ENCODE measurements at regions of chr2 and their contacts with region 1.

Region 1: DNA sequence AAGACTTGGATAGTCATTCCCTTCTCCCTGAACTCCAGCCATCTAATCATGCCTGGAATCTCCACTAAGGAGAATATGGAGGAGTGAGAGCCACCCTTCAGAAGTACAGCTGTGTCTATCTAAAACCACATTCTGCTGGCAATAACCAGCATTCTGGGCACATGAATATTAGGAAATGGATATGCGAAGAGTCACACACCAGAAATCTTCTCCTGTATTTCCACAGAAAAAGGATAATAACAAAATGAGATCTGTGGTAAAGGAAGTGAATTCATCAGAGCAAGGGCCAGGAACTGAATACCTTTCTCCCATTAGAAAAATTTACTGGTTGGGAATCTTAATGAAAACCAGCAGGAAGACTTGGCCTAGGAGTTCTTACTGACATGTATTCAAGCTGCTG is 218.8 kb downstream of the SCG2 start:
- DNase-seq: no peak

Region 2: DNA sequence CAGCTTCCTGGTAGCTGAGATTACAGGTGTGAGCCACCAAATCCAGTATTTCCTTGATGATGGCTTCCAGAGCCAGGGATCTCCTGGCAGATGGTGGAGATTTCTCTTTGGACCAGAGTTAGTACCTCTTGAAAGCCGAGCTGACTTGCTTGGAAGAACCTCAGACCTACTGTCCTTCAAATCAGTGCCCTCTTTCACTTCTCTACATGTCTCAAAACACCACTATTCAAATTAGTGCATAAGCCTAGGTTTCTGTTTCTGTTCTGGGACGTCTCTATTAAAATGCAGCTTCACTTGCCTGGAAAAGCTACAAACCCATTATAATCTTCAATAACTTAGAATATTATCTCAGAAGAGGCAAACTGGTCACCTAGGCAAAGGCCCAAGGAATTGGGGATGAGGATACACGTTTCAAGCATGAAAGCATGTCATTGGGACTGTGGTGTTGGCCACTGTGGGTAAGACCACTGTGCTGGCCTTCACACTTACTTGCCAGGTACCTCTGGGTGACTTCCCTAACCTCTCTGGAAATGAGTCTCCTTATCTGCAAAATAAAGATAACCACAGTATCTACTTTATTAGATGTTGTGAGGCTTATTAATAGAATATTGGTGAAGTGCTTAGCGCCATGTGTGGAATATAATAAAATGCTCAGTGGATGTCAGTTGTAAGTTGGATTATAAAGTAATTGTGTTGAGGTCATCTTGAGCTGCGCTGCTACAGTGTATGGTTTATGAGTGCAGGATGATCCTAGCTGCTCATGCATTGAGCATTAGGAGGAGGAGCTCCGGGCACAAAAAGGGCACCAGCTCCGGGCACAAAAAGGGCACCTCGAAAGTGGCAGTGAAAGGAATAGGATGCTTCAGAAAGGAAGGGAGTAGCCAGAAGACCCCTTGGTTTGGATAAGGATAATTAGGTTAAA is 1574.5 kb after region 1 on chr2:
- intact Hi-C with region 1: loop called in 1 of 2 experiments (anchors 5 kb)
- DNase-seq: no peak

Measured in posterior vena cava (tissue), 2 donors.